ENCODE measurements at regions of chr6 and their contacts with region 1.

Region 1: DNA sequence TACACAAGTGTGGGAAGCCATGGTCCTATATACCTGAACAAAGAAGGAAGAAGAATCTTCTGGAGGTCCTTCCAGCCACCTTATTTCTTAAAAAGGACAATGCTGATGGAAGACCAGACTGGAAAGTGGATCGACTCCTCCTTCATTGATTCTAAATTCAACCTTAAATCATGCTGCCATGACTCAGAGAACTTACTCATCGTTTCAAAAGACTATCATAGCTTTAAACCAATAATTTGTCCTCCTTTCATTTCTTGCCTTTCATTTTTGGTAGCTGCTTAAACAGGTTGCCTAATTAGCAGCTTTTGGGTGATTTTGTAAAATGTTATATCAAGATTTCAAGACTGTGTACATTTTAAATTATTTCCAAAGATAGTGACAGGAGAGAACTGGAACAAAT is 60.8 kb downstream of the RTN4IP1 start:
- DNase-seq: no peak
- H3K4me3 ChIP-seq: no peak overlapping the region
- H3K27ac ChIP-seq: no peak overlapping the region
- H3K4me1 ChIP-seq: peaks cover 8% of the 10 kb centered on the region
- CTCF ChIP-seq: no peak

Region 2: DNA sequence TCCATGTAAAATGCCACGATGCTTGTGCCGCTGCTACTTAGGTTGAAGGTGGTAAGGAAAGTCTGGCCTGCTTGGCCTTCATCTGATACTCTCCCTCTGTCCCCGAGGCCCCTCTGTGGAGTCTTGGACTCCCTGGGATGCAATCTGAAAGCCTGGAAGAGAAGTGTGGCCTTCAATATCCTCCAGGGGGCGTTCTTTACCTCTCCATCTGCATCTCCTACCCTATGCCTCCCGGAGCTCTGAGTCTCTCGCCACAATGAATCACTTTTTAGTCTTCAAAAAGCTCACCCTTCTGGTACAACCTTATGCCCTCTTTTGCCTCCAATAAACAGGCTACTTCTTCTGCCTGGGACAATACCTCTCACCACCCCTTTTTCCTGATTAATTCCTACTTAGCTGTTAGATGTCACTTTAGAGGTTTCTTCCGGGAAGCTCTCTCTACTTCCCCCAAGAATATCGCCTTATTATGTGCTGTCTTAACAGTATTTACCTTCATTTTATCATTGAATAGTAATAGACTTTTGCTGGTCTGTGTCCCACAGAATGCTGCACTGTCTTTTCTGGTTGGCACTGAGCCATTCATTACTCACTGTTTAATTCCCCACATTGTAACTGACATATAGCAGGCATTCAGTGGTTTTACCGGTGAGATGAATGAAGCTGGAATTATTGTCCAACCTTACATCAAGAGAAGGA is 229.0 kb before region 1 on chr6:
- CTCF ChIA-PET with region 1: no interaction called
- POLR2A ChIA-PET with region 1: no interaction called
- intact Hi-C with region 1: loop called (anchors 5 kb)
- DNase-seq: peak; percentile 65
- H3K4me3 ChIP-seq: no peak overlapping the region
- H3K27ac ChIP-seq: no peak overlapping the region
- H3K4me1 ChIP-seq: no peaks in the 10 kb centered on the region
- CTCF ChIP-seq: peak; percentile 86

Region 3: GRCh38 chr6:106997390-106998158 is 429.0 kb after region 1 on chr6:
- CTCF ChIA-PET with region 1: interaction called, 4 read pairs
- POLR2A ChIA-PET with region 1: no interaction called
- intact Hi-C with region 1: loop called (anchors 5 kb)
- DNase-seq: peak; percentile 87
- H3K4me3 ChIP-seq: no peak overlapping the region
- H3K27ac ChIP-seq: no peak overlapping the region
- H3K4me1 ChIP-seq: peaks cover 4% of the 10 kb centered on the region
- CTCF ChIP-seq: peak; percentile 99

Measured in OCI-LY7 (cell line).